ENCODE measurements at regions of chr4 and their contacts with region 1.

Region 1: DNA sequence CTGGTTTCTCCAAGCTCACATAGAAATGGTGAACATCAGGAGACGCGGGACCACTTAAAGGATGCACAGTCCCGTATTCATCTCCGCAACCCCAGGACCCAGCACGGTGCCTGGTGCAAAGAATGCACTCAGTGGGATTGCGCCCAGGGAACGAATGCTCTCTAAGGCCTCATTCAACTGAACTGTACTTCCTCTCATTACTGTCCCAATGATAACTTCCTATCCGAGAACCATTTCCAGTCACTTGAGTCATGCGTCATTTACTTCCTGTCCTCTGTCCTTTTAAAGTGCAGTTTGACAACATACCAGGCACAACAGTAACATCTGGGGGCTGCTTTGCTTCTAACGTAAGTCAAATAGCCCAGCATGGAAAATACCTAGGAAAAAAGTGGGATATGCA is 75.7 kb downstream of the RBM47 start:
- DNase-seq: no peak
- H3K4me3 ChIP-seq: no peak overlapping the region
- H3K27ac ChIP-seq: no peak overlapping the region; the same call in 1 of the 2 replicates
- H3K4me1 ChIP-seq: peaks cover 3 to 10% (median 5%) of the 10 kb centered on the region in 4 experiments; a peak in 5 of 7 replicates
- H3K27me3 ChIP-seq: no peaks in the 10 kb centered on the region
- CTCF ChIP-seq: no peak
- EP300 ChIP-seq: no peak
- POLR2A ChIP-seq: no peak
- RAD21 ChIP-seq: no peak

Region 2: DNA sequence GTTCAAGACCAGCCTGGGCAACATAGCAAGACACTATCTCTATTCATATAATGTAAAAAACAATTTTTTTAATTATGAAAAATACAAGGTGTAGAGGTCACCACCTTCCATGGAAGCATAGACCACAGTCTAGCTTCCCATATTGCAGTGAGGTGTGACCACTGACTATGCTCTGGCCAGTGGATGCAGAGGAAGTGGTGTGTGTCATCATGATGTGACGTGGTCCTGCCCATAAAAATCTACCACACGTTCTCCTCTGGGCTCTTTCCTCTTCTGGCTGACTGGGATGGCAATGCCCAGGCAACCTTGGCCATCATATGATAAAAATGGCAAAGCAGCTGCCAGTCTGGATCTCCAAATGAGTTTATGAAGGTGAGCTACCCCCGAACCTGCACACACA is 10.0 kb after region 1 on chr4:
- CTCF ChIA-PET with region 1: interaction called, 12 read pairs
- POLR2A ChIA-PET with region 1: interaction called, 5 read pairs
- DNase-seq: no peak
- H3K4me3 ChIP-seq: no peak overlapping the region
- H3K27ac ChIP-seq: no peak overlapping the region
- H3K4me1 ChIP-seq: peaks cover 4 to 12% (median 7%) of the 10 kb centered on the region in 4 experiments; a peak in 6 of 7 replicates
- H3K27me3 ChIP-seq: no peaks in the 10 kb centered on the region
- CTCF ChIP-seq: no peak
- EP300 ChIP-seq: no peak
- POLR2A ChIP-seq: no peak
- RAD21 ChIP-seq: no peak

Region 3: DNA sequence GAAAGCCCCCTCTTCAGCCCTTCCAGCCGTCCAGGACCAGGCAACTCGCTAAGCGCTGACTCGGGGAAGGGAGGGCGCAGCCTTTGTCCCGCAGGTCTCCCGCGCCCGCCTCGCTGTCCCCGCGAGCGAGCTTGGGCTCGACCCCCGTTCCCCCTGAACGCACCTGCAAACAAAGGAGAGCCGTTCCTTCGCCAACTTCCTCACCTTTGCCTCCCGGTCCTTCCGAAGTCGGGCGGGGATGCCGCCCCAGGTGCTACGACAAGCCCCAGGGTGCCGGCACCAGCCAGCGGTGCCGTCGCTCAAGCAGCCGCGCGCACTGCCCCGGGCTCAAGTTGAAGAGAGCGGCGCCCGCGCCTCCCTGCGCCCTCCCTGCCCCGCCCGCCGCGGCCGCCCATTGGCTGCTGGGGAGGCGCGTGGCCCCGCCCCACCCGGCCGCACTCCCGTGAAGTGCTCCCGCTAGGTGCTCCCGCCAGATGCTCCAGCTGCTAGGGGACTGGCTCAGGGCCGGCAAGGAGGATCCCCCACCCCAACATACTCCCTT is 302.9 kb after region 1 on chr4:
- CTCF ChIA-PET with region 1: no interaction called
- POLR2A ChIA-PET with region 1: no interaction called
- DNase-seq: peak; percentile 63 to 90
- H3K4me3 ChIP-seq: peak overlapping the region; percentile 84 to 98 (median 90)
- H3K27ac ChIP-seq: peak overlapping the region; percentile 86
- H3K4me1 ChIP-seq: peaks cover 0 to 3% (median 1%) of the 10 kb centered on the region in 4 experiments; a peak in 2 of 7 replicates
- H3K27me3 ChIP-seq: no peaks in the 10 kb centered on the region
- CTCF ChIP-seq: no peak
- EP300 ChIP-seq: no peak
- POLR2A ChIP-seq: peak; percentile 94 to 98
- RAD21 ChIP-seq: no peak